Adrenal gland (tissue), 19 donors: ENCODE measurements at regions of chr6 and their contacts with region 1.

Region 1: DNA sequence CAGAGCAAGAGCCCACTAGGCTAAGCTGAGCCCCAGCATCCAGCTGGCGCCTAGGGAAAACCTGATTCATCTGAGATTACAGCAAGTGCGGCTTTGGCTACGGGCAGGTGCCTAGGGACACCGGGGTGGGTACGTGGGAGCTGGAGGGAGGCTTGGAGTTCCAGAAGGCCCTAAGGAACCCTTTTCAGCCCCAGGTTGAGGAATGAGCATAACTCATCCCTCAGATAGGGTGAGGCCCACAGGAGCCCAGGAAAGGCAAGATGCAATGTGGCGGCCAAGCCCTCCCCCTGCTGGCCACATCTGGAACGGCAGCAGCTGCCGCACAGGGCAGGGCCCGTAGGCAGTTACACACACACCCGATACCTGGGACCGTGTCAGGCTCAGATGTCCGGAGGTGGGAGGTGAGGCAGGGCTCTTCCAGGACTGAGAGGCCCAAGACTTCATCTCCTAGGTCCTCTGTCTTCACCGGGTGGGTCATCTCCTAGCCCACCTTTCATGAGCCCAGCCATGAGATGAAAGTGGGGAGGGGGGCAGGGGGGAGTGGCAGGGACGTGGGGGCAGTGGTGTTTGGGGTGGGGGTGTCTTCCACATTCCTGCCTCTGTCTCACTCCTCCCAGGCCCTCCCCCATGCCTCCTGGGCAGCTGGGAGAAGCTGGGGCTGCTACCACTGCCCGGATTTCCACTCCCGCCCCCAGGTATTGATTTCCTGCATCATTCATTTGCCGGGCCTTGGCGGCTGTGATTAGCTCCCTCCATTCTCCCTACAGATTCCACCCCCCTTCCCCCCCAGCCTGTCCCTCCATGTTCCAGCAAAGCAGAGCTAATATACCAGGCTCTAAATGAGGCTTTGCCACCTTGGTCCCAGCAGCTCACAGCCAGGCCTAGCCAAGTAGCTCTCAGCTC is 5.5 kb downstream of the MDGA1 start:
- DNase-seq: peak; percentile 65 to 92 (median 78)
- H3K4me3 ChIP-seq: no peak overlapping the region
- H3K27ac ChIP-seq: peak overlapping the region in 1 of 5 donors; percentile 62
- H3K4me1 ChIP-seq: peaks cover 11 to 42% of the 10 kb centered on the region in 2 donors
- H3K27me3 ChIP-seq: no peaks in the 10 kb centered on the region
- CTCF ChIP-seq: peak; percentile 91 to 98 (median 94)
- POLR2A ChIP-seq: no peak

Region 2: DNA sequence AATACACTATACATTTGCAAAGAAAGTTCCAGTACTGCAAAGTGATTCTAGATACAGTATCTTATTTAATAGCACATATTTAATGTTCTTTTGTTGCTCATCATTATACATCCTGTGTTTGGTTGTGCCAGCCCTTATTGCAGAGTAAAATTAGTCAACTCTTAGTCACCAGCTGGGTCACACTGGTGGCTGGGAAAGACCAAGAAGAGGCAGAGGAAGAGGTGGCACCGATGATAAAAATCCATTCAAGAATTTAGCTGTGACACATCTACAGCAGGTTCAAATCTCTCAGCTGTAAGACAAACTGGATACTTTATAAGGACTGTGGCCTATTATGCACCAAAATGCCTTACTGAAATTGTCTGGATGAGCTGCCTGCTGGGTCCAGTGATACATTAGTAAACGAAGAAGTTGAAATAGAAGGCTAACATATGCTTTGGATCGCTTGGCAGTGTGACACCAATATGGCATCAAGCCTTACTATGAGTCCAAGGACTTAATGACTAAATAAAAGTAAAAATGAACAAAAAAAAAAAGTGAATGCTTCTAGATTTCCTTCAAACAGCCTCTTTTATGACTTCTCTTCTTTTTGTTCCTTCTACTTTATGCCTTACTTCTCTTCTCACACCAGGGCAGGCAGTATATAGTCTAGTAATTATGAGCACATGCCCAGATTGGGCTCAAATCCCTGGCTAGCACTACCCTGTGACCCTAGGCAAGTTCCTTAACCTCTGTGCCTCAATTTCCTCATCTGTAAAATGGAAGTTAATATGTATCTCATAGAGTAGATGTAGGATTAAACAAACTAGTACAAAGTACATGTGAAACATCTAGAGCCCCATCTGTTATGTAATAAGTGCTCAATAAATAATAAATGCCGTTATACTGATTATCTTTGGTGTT is 367.8 kb before region 1 on chr6:
- intact Hi-C with region 1: loop called in 1 of 2 experiments (anchors 5 kb)
- DNase-seq: peak in 3 of 7 donors; percentile 18 to 41 (median 28)
- H3K4me3 ChIP-seq: no peak overlapping the region
- H3K27ac ChIP-seq: peak overlapping the region in 1 of 5 donors; percentile 48
- H3K4me1 ChIP-seq: peaks cover 3 to 16% of the 10 kb centered on the region in 2 donors
- H3K27me3 ChIP-seq: no peaks in the 10 kb centered on the region
- CTCF ChIP-seq: no peak
- POLR2A ChIP-seq: no peak

Region 3: GRCh38 chr6:37473397-37474095 is 218.6 kb before region 1 on chr6:
- intact Hi-C with region 1: no loop called
- DNase-seq: peak in 6 of 7 donors; percentile 43 to 84 (median 62)
- H3K4me3 ChIP-seq: no peak overlapping the region
- H3K27ac ChIP-seq: no peak overlapping the region
- H3K4me1 ChIP-seq: no peaks in the 10 kb centered on the region
- H3K27me3 ChIP-seq: no peaks in the 10 kb centered on the region
- CTCF ChIP-seq: no peak
- POLR2A ChIP-seq: no peak

Region 4: DNA sequence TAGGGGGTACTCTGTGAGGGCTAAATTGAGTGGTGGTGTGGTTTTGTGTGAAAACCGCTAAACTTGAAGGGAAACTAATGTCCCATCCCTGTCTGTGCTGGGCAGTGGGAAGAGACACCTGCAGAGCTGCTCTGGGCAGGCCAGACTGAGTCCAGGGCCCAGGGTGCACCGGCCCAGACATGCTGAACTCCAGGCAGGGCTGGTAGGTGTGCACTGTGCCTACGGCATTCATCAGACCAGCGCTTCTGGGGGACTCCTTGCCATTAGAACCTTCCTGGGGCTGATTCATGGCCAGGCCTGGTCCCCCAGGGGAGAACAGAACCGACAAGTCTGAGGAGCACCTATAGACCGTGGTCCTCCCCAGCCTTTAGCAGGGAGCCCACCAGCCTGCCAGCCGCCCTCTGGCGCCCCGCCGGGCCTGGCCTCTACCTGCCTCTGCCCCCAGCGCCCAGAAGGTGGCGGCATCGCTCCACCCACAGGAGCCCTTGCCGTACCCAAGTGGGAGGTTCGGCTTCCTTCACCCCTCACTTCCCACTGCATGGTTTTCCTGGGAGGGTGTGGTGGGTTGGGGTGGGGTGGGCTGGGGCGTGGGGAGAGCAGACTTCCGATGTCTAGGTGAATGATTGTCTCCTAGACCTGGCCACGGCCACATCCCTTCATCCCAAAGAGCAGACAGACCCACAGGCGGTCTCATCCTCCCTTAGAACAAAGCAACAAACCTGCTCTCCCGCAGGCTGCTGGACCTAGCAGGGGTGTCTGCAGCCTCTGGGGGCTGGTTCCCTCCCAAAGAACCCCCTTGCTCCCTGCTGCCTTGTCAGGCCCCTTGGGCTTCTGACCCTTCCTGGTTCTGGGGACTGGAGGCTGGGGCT is 208.0 kb before region 1 on chr6:
- intact Hi-C with region 1: loop called (anchors 5 kb)
- DNase-seq: peak; percentile 45 to 79 (median 66)
- H3K4me3 ChIP-seq: no peak overlapping the region
- H3K27ac ChIP-seq: no peak overlapping the region
- H3K4me1 ChIP-seq: no peaks in the 10 kb centered on the region
- H3K27me3 ChIP-seq: no peaks in the 10 kb centered on the region
- CTCF ChIP-seq: peak; percentile 64 to 89 (median 70)
- POLR2A ChIP-seq: no peak

Region 5: GRCh38 chr6:37741757-37742400 is 49.7 kb after region 1 on chr6:
- intact Hi-C with region 1: no loop called
- DNase-seq: peak in 2 of 7 donors; percentile 24 to 35
- H3K4me3 ChIP-seq: no peak overlapping the region
- H3K27ac ChIP-seq: no peak overlapping the region
- H3K4me1 ChIP-seq: no peaks in the 10 kb centered on the region
- H3K27me3 ChIP-seq: no peaks in the 10 kb centered on the region
- CTCF ChIP-seq: peak in 1 of 6 experiments; percentile 51
- POLR2A ChIP-seq: no peak

Region 6: DNA sequence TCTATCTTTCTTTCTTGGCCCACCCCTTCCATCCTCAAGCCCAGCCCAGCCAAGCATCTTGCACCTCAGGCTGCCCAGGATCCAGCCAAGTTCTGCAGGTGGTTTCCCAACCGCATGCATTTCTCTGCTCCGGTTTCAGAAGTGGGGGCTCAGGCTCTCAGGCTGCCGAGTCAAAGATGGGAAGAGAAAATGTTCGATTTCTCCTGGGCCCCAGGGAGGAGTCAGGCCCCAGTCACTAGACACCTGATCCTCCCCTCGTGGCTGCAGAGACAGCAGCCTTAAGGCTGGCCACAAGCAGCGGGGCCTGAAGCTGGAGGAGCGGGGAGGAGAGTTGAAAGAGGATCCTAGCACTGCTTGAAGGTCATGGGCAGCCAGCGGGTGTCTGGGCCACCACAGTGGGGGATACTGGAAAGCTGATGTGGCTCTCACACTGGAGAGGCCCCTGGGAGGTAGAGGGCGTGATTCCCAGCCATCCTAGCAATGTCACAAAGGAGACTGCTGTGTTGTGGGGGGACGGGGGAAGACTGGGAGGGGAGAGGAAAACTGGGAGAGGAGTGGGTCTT is 85.2 kb after region 1 on chr6:
- intact Hi-C with region 1: no loop called
- DNase-seq: no peak
- H3K4me3 ChIP-seq: no peak overlapping the region
- H3K27ac ChIP-seq: no peak overlapping the region
- H3K4me1 ChIP-seq: no peaks in the 10 kb centered on the region
- H3K27me3 ChIP-seq: no peaks in the 10 kb centered on the region
- CTCF ChIP-seq: no peak
- POLR2A ChIP-seq: no peak